MCF 10A (cell line): ENCODE measurements at regions of chr4 and their contacts with region 1.

Region 1: GRCh38 chr4:128517739-128518510 is 230.3 kb upstream of the PGRMC2 start:
- DNase-seq: peak; percentile 93
- H3K4me3 Mint-ChIP-seq: peak overlapping the region; percentile 7
- H3K27ac Mint-ChIP-seq: peak overlapping the region; percentile 90
- H3K4me1 Mint-ChIP-seq: peaks cover 48% of the 10 kb centered on the region
- H3K27me3 Mint-ChIP-seq: no peaks in the 10 kb centered on the region
- CTCF ChIP-seq: no peak

Region 2: DNA sequence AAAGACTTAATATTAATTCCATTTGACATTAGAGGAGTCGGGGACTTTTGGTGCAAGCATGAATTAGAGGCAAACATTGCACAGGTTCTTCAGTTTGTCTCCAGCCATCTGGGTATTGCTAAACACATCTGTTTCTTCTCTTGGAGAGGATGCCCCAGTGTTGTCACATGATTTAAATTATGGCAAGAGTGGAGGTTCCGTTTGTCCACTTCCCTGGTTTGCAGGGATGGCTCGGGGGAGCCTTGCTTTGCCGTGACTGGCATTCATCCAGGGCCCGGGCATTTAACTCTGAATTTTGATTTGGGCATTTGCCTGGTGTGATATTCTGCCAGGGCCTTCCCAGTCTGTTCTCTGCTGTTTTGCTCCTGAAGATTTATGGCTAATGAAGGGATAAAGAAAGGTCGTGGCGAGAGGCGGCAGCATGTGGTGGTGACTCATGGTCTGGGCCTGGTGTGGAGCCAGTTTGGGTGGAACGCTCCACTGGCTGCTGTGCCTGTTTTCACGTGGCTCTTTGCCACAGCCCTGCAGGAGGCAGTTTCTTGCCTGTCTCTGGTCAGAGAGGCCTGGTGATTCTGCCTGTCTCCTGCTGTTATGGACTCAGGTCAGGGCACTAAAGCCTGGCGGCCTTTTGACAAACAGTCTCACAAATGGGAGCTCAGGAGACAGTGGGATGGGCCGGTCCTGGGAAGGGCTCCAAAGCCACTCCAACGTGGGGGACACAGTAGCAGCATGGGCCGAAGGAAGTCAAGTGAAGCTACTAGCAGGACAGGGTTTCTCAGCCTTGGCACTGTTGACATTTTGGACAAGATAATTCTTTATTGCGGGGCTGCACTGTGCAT is 130.9 kb before region 1 on chr4:
- CTCF ChIA-PET with region 1: no interaction called
- POLR2A ChIA-PET with region 1: no interaction called
- intact Hi-C with region 1: no loop called
- DNase-seq: peak; percentile 94
- H3K4me3 Mint-ChIP-seq: peak overlapping the region; percentile 52
- H3K27ac Mint-ChIP-seq: peak overlapping the region; percentile 84
- H3K4me1 Mint-ChIP-seq: peaks cover 45% of the 10 kb centered on the region
- H3K27me3 Mint-ChIP-seq: no peaks in the 10 kb centered on the region
- CTCF ChIP-seq: no peak

Region 3: DNA sequence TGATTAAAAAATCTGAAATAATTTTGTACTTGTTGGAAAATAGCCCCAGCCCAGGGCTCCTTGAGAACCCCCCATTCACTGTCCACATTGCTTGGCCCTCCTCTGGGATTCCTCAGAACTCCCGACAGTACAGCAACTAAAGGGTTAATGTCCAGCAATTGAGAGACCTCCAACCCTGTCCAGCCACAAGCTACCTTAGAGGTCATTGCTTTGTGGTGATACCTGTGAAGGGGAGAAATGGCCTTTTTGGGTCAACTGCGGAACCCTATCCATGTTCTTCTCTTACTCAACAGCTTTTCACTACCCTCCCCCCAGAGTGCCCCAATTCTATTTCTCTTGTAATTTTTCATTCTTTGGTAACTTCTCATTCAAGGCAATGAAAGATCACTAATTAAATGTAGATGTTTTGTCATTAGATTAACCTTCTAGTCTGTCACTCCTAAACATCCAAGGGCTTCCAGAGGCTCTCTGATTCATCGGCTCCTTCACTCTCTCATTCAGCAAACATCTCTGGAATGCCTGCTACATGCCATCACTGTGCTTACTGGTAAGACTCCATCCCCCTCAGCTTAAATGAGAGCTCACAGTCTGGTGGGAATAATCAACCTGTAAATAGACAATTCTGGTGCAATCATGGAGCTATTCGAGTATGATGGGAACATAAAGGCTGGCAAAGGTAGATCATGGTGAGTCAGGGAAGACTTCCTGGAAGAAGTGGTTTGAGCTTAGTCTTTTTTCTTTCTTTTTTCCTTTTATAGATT is 11.0 kb after region 1 on chr4:
- CTCF ChIA-PET with region 1: interaction called, 3 read pairs
- POLR2A ChIA-PET with region 1: interaction called, 10 read pairs
- intact Hi-C with region 1: no loop called
- DNase-seq: peak; percentile 93
- H3K4me3 Mint-ChIP-seq: no peak overlapping the region
- H3K27ac Mint-ChIP-seq: peak overlapping the region; percentile 52
- H3K4me1 Mint-ChIP-seq: peaks cover 26% of the 10 kb centered on the region
- H3K27me3 Mint-ChIP-seq: no peaks in the 10 kb centered on the region
- CTCF ChIP-seq: no peak

Region 4: DNA sequence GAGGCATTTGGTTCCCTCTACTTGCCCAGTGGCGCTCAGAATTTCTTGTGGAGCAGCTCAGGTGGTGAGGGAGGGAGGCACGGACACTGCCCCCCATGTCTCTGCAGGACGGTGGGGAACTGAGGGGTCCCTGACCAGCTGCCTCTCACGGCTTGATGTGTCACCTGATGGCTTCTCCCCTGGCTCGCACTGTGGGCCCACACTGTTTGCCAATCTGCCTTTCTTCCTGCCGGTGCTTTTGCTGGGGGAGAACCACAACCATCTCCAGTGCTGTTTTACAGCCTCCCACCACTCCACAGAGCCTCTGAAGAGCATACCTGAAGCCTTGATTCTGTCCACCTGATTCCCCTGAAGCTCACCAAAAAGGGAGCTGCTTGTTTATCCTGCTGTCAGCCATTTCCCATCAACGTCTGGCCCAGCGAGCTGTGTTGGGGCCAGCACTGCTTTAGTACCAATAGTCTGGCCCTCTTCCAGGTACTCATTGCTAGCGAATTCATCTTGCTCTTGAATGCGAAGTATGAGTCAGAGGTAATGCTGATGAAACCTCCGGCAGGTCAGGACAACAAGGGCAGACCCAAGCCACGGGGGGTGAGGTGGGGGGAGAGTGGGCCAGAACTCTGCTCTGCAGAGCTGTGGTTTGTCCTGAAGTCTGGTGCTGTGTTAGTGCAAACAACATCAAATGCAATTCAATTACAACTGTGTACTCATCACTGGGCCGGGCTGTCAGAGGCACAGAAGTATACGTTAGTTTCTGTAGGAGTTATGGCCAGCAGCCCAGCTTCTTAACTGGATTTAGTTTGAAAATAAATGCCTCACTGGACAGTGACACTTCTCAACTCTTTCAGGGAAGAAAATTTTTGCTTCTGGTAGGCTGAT is 83.3 kb after region 1 on chr4:
- CTCF ChIA-PET with region 1: no interaction called
- POLR2A ChIA-PET with region 1: interaction called, 10 read pairs
- intact Hi-C with region 1: no loop called
- DNase-seq: peak; percentile 99
- H3K4me3 Mint-ChIP-seq: peak overlapping the region; percentile 53
- H3K27ac Mint-ChIP-seq: peak overlapping the region; percentile 84
- H3K4me1 Mint-ChIP-seq: peaks cover 64% of the 10 kb centered on the region
- H3K27me3 Mint-ChIP-seq: no peaks in the 10 kb centered on the region
- CTCF ChIP-seq: no peak